Posterior vena cava (tissue), 2 donors: ENCODE measurements at regions of chr9 and their contacts with region 1.

Region 1: DNA sequence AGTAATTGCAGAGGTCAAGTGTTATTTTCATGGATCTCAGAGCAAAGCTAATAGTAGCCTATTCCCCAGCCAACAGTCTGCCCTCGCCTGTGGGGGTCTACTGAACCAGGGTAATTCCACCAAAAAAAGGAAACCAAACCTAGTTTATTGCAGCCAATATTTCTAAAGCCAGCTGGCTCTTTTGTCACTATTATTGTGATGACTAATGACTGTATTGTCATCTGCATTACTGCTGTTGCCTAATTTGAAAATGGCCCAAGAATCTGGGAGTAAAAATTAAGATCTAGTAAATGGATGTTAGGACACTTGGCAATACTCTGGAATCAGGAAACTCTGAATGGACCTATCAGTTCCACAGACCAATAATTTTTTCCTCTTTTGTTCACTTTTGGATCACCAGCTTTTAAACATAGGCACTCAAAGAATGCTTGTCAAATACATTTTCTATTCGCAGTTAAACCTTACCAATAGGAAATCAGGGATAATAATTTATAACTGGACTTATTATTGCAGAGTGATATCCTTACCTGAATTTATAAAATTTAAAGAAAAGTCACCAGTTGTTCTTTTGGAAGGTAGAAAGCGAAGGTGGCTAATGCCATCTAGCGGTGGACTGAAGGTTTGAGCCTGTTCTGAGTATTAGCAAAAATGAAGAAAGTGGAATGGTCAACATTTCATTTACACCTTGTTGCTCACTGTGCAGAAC is 69.2 kb downstream of the SYK start:
- DNase-seq: no peak

Region 2: GRCh38 chr9:89597711-89598625 is 1272.8 kb before region 1 on chr9:
- intact Hi-C with region 1: loop called in 1 of 2 experiments (anchors 10 kb)
- DNase-seq: peak; percentile 43

Region 3: DNA sequence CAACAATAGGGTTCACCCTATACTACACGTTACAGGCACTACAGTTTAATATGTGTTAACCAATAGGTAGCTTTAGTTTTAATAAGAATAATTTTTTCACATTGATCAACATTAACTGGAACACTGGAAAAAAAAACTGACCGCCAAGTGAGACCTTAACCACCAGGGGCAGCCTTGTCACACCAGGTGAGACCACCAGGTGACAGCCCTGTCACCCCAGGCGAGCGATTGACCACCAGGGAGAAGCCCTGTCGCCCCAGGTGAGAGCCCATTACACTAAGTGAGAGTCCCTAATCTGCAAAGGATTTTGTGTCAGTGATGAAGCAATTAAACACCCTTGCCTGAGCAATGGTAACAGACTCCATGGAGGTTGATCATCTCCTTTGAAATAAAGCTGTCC is 144.6 kb before region 1 on chr9:
- intact Hi-C with region 1: no loop called
- DNase-seq: no peak

Region 4: GRCh38 chr9:90801583-90802289 is 69.0 kb before region 1 on chr9 and contains the start of gene SYK:
- intact Hi-C with region 1: no loop called
- DNase-seq: peak; percentile 92
- total RNA-seq, gene SYK: 13.2 to 19.5 TPM